Aorta (tissue), 5 donors: ENCODE measurements at regions of chr15 and their contacts with region 1.

Region 1: DNA sequence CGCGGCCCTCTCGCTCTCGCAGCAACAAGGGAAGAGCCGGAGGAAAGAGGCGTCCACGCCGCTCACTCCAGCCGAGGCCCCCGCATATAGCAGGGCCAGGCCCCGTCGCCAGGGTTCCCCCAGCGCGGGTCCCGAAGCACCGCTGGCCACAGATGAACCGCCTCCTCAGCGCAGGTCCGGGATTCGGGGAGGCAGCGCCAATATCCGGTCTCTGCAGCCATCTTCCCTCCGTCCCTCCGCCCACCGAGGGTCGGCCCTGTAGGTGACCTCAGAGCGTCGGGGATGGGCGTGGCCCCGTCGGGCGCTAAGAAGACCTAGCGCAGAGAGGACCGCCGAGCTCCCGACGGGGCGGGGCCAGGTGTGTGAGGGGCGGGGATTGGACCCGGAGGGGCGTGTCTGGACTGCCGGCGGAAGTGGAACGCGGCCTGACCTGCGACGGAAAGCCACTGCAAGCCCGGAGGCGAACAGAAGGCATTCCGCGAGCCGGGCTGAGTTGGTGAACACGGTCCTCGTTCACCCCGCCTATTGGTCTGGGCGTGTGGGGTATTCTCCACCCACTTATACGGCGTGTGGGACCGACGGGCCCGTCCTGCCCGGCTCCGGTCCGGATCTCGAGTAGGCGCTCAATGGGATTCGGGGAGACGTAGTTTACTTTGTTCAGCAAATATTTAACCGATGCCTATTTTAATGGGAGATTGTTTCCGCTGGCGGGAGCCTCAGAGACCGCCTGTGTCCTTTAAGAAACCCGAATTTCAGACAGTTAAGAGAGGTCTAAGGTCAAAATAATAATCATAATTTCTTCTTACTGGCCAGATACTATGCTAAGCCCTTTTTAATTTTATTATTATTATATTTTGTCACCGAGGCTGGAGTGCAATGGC is 26.9 kb upstream of the MTHFS start:
- DNase-seq: peak; percentile 95 to 97
- ATAC-seq: peak; percentile 99
- H3K4me3 ChIP-seq: peak overlapping the region; percentile 63 to 73
- H3K27ac ChIP-seq: peak overlapping the region; percentile 71 to 84
- H3K4me1 ChIP-seq: no peaks in the 10 kb centered on the region
- H3K27me3 ChIP-seq: no peaks in the 10 kb centered on the region

Region 2: GRCh38 chr15:80105595-80106450 is 182.1 kb after region 1 on chr15:
- intact Hi-C with region 1: no loop called
- DNase-seq: no peak
- ATAC-seq: no peak
- H3K4me3 ChIP-seq: no peak overlapping the region
- H3K27ac ChIP-seq: no peak overlapping the region
- H3K4me1 ChIP-seq: peaks cover 0 to 3% of the 10 kb centered on the region in 2 donors
- H3K27me3 ChIP-seq: no peaks in the 10 kb centered on the region

Region 3: DNA sequence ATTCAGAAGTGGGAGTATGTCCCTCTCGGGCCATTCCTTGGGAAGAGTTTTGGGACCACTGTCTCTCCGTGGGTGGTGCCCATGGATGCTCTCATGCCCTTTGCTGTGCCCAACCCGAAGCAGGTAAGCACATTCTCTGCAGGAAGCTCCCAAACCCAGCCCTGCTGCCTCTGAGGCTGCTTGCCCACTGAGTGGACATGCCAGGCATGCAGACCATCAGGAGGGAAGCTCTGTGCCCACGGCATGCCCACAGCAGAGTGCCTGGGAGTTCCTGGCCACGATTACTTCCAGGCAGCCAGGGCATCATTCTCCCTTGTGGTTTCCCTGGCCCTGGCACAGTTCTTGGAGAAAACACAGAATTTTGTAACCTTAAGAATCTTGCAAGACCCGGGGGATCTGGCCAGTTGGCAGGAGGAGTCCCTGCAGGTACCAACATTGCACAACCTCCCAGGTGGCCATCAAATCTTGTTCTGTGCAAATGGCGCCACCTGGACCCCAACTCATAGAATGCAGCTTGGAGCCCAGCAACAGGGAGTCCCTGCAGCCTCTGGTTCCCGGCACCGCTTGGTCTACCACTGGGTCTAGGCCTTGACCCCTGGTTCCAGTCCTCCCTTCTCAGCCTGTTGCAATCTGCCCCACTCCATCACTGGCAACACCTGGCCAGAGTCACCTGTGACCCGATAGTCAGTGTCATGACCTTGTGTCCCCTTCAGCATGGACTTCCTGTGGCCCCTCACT is 249.4 kb after region 1 on chr15:
- intact Hi-C with region 1: loop called in 1 of 2 experiments (anchors 10 kb)
- DNase-seq: peak in 1 of 2 donors; percentile 73
- ATAC-seq: peak; percentile 75
- H3K4me3 ChIP-seq: no peak overlapping the region
- H3K27ac ChIP-seq: peak overlapping the region; percentile 8 to 98
- H3K4me1 ChIP-seq: peaks cover 2 to 7% of the 10 kb centered on the region in 2 donors
- H3K27me3 ChIP-seq: no peaks in the 10 kb centered on the region

Region 4: GRCh38 chr15:80436511-80437307 is 513.0 kb after region 1 on chr15:
- intact Hi-C with region 1: no loop called
- DNase-seq: no peak
- ATAC-seq: no peak
- H3K4me3 ChIP-seq: no peak overlapping the region
- H3K27ac ChIP-seq: no peak overlapping the region
- H3K4me1 ChIP-seq: no peaks in the 10 kb centered on the region
- H3K27me3 ChIP-seq: no peaks in the 10 kb centered on the region